Activated naive CD8-positive, alpha-beta T cell treated with anti-CD3 and anti-CD28 coated beads, Interleukin-2, amount 10 ng/mL, durations not matched to agents 7 days and 5 days (primary cell): ENCODE measurements at regions of chr12 and their contacts with region 1.

Region 1: DNA sequence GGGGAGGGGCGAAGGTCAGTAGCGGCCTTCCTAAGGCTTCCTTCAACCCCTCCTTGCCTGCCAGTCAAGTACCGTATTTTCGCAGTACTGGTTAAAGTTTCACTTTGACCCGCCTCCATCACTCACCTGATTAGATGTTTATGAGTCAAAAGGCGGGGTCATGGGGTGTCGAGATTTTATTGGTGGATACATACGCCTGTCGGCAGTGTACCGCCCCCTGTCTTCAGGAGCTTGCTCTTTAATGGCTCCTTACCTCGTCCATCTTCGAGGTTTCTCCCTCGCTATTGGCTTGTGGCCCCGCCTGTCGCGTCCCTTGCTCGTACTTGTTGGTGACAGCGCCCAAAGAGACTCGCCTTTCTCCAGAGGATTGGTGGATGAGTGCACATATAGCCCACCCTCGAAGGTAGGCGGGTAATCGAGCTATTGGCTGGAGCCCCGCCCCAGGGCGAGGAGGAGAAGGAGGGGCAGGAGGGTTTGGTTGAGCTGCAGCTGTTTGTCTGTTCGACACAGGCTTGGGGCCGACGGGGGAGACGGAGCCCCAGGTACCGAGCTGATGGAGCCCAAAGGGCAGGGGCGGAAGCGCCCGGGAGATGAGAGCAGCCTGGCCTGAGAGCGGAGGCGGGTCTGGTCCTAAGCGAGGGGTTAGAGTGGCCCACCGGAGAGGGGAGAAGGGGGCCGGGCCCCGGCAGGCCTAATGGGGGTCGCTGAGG is at the start of gene RAB5B:
- DNase-seq: peak; percentile 90
- ATAC-seq: peak; percentile 95
- H3K4me3 Mint-ChIP-seq: no peak within 1 kb of the TSS
- H3K27ac Mint-ChIP-seq: no peak within 1 kb of the TSS
- H3K4me1 Mint-ChIP-seq: peaks cover 17% of the 10 kb centered on the region
- H3K27me3 Mint-ChIP-seq: no peaks in the 10 kb centered on the region
- total RNA-seq, gene RAB5B: 69.7 to 72.4 TPM

Region 2: DNA sequence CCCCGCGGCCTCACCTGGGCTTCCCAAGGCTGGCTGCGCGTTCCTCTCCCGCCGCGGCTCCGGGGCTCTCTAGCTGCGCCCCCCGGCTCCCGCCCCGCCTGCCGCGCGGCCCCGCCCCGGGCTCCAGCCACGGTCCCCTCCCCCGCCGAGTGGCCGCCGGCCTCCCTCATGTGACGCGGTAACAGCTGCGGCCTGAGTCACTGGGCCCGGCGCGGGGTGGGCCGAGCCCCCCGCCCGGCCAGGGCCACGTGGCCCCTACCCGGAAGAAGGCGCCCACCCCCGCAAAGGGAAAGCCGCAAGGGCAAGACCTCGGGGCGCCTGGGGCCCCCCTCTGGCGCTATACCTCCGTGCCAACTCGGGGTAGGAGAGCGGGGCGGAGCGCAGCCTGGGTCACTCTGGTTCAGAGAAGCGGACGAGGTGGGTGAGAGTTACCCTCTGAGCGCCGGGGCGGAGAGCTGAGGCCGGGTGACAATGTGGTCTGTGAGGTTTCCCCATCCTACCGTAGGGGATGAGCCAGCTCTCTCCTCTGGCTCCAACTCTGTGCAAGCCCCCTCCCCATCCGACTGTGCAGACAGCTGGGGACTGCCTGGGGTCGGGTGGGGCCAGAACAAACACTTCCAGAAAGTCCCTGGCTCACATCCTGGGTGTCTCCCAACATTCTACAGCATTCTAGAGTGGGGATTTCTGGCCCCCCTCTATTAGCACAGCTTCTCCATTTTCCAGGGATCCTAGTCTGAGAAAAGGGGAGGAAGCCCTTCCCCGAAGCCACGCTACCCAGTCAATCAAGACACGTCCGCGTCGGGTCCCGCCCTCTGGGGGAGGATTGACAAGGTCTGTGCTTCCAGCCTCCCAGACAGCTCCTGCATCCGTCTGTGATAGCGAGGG is 244.6 kb before region 1 on chr12 and contains the start of gene CD63:
- POLR2A ChIA-PET with region 1: interaction called, 10 read pairs
- DNase-seq: peak; percentile 75
- ATAC-seq: peak; percentile 66
- H3K4me3 Mint-ChIP-seq: peak within 1 kb of the TSS; percentile 85
- H3K27ac Mint-ChIP-seq: peak within 1 kb of the TSS; percentile 86
- H3K4me1 Mint-ChIP-seq: peaks cover 47% of the 10 kb centered on the region
- H3K27me3 Mint-ChIP-seq: no peaks in the 10 kb centered on the region
- total RNA-seq, gene CD63: 150 to 165 TPM

Region 3: DNA sequence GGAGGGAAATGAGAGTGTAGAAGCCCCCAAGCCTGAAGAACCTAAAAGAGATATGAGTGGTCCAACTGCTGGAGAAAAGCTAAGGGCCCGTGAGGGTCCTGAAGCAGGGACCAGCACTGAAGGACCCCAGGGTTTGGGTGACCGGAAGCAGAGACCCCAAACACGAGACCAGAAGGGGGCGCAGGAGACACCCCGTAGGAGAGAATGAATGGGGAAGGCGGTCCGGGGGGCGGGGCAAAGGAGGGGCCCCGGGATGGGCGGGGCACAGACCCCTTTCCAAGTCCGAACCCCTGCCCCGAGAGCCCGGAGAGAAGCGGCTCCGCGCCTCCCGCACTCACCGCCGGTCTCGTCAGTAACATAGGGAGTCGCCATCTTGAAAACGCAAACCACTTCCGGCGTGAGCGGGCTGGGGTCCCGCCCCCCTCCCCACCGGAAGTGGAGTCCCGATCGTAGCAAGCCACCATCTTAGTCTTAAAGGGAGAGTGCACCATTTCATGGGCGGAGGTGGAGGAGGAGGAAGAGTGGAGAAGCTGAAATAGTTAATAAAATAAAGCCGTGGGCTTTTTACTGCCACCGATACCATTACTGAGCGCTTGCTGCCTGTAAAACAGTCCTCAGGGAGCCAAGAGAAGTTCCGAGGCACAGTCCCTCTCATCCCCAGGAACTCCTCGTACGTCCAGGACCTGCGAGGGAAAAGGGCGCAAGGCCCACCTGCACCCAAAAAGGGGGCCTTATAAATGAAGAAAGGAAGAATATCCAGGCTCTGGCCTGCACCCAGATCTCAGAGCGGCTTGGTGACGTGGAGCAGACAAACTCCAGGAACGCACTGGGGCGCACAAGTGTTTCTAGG is 46.8 kb before region 1 on chr12:
- POLR2A ChIA-PET with region 1: interaction called, 43 read pairs
- DNase-seq: peak; percentile 93
- ATAC-seq: peak; percentile 35
- H3K4me3 Mint-ChIP-seq: peak overlapping the region; percentile 98
- H3K27ac Mint-ChIP-seq: peak overlapping the region; percentile 98
- H3K4me1 Mint-ChIP-seq: peaks cover 44% of the 10 kb centered on the region
- H3K27me3 Mint-ChIP-seq: no peaks in the 10 kb centered on the region

Region 4: DNA sequence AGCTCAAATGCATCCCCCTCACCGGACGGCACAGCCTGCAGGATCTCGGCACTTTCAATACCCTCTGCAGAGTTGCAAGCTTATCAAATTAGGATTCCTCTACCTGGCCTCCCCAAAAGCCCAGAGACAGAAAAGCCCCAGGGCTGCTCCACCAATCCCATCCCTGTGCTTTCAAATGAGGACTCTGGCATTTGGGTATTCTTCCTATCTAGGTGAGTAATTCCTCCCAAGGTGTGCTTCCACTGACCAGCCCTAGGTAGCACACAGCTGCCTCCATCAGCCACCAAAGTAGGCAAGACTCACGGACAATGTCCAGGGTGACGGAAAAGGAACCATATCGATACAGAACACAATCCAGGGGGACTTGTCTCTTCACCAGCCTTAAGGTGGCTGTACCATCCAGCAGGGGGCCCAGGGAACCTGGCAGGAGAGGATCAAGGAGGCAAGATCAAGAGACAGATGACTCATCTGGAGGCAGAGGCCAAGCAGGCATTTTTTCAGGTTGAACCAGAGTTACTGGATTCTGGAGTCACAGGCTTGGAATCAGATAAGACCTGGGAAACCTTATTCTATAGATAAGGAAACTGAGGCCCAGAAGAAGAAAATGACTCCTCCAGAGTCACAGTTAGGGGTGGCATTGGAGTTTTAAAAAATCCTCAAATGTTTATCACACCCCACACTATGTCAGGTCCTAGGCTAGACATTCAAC is 17.8 kb before region 1 on chr12:
- POLR2A ChIA-PET with region 1: interaction called, 38 read pairs
- DNase-seq: peak; percentile 48
- ATAC-seq: peak; percentile 69
- H3K4me3 Mint-ChIP-seq: no peak overlapping the region
- H3K27ac Mint-ChIP-seq: peak overlapping the region; percentile 2
- H3K4me1 Mint-ChIP-seq: peaks cover 13% of the 10 kb centered on the region
- H3K27me3 Mint-ChIP-seq: no peaks in the 10 kb centered on the region

Region 5: GRCh38 chr12:56020423-56021184 is 46.9 kb after region 1 on chr12 and contains the start of gene IKZF4:
- POLR2A ChIA-PET with region 1: interaction called, 19 read pairs
- DNase-seq: peak; percentile 42
- ATAC-seq: peak; percentile 17
- H3K4me3 Mint-ChIP-seq: peak within 1 kb of the TSS; percentile 93
- H3K27ac Mint-ChIP-seq: peak within 1 kb of the TSS; percentile 96
- H3K4me1 Mint-ChIP-seq: peaks cover 42% of the 10 kb centered on the region
- H3K27me3 Mint-ChIP-seq: no peaks in the 10 kb centered on the region
- total RNA-seq, gene IKZF4: 14.9 to 18.2 TPM